Head of caudate nucleus (tissue), 42 donors: ENCODE measurements at regions of chr4 and their contacts with region 1.

Region 1: DNA sequence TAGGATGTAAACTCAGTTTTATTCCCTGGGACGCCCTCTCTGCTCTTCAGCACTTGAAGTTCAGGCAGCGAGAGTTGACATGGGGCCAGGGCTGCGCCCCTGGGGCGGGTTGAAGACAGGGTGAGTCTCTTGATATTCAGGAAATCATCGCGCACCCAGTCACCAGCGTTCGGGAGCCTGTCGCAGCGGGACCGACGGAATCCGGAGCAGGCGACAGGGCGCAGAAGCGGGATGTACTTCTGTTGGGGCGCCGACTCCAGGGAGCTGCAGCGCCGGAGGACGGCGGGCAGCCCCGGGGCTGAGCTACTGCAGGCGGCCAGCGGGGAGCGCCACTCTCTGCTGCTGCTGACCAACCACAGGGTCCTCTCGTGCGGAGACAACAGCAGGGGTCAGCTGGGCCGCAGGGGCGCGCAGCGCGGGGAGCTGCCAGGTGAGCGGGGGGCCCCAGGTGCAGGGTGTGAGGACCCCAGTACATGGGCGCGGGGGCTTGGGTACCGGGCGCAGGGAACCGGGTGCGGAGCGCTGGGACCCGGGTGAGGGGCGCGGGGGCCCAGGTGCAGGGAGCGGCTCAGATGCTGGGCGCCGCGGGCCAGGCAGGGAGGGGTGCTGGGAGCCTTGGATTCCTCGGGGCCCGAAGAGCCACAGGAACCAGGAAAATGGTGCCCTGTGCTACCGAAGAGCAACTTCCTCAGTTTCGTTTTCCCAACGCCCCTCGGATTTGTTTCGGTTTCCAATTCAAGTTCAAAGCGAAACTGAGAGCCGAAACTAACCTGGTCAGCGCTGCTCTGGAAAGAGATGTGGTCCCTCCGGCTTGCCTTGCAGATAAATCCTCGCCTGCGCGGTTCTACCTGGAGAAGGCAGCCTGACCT is at the start of gene HERC6:
- DNase-seq: peak; percentile 49 to 89 (median 77)

Region 2: GRCh38 chr4:88284439-88285234 is 94.3 kb before region 1 on chr4 and contains the start of gene PPM1K:
- intact Hi-C with region 1: loop called (anchors 5 kb)
- DNase-seq: peak; percentile 98 to 100 (median 99)

Region 3: GRCh38 chr4:88456757-88457306 is 77.9 kb after region 1 on chr4 and contains the start of gene HERC5:
- intact Hi-C with region 1: loop called (anchors 2 kb)
- DNase-seq: peak; percentile 61 to 92 (median 79)

Region 4: GRCh38 chr4:88517825-88518224 is 138.9 kb after region 1 on chr4:
- intact Hi-C with region 1: loop called (anchors 2 kb)
- DNase-seq: no peak